K562 (cell line): ENCODE measurements at regions of chr1 and their contacts with region 1.

Region 1: DNA sequence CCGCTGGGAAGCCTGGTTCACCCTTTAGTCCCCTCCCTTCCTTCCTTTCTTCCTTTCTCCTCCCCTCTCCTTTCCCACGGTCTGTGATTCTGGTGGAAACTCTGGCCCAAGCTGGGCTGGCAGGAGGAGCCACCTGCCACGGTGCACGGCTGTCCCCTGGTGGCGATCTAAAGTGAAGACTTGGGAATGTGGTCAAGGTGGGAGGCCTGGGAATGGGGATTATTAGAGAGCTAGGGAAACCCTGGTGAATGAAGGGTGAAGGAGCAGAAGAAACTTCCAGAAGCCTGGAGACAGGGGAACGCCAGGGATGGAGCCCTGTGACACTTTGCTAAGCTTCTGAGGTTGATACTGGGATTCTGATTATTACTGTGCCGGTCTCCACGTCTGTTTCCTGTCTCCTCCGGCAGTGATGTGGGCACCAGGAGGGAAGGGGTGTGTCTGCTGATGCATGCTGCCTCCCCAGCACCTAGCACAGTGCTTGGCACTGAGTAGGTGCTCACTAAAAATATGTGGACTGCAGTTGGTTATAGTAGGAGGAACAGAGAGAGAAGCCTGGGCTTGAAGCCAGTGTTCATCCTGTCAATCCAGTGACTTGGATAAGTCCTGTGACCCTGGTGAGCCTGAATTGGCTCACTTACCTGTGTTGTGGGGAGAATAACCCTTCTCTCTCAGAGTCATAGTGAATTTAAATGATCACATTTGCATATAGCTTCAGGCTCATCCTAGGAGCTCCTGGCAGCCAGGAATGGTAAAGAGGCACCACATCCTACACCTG is 71.2 kb upstream of the NBPF3 start:
- DNase-seq: peak; percentile 72 to 86 (median 82)
- ATAC-seq: peak; percentile 91
- H3K4me3 ChIP-seq: no peak overlapping the region
- H3K27ac ChIP-seq: no peak overlapping the region
- H3K4me1 ChIP-seq: peaks cover 0 to 5% of the 10 kb centered on the region in 2 experiments; a peak in 1 of 5 replicates
- H3K27me3 ChIP-seq: peaks cover 5 to 6% of the 10 kb centered on the region in 2 experiments; a peak in 3 of 5 replicates
- CTCF ChIP-seq: peak; percentile 98 to 99 (median 99)
- EP300 ChIP-seq: peak; percentile 34
- POLR2A ChIP-seq: no peak
- RAD21 ChIP-seq: peak; percentile 100

Region 2: GRCh38 chr1:20493839-20494608 is 874.7 kb before region 1 on chr1:
- CTCF ChIA-PET with region 1: no interaction called
- POLR2A ChIA-PET with region 1: no interaction called
- in situ Hi-C with region 1: no loop called
- intact Hi-C with region 1: no loop called
- DNase-seq: peak; percentile 88 to 90 (median 90)
- ATAC-seq: peak; percentile 90
- H3K4me3 ChIP-seq: no peak overlapping the region
- H3K27ac ChIP-seq: no peak overlapping the region
- H3K4me1 ChIP-seq: peaks cover 0 to 3% of the 10 kb centered on the region in 2 experiments; a peak in 2 of 5 replicates
- H3K27me3 ChIP-seq: peaks cover 10 to 30% of the 10 kb centered on the region in 2 experiments; a peak in 4 of 5 replicates
- CTCF ChIP-seq: peak; percentile 96 to 99 (median 99)
- EP300 ChIP-seq: no peak
- POLR2A ChIP-seq: no peak
- RAD21 ChIP-seq: peak; percentile 99

Region 3: GRCh38 chr1:20702416-20702815 is 666.3 kb before region 1 on chr1:
- CTCF ChIA-PET with region 1: no interaction called
- POLR2A ChIA-PET with region 1: no interaction called
- in situ Hi-C with region 1: loop called (anchors 10 kb)
- intact Hi-C with region 1: no loop called
- DNase-seq: peak in 2 of 4 experiments; percentile 44 to 48
- ATAC-seq: peak; percentile 78
- H3K4me3 ChIP-seq: no peak overlapping the region
- H3K27ac ChIP-seq: no peak overlapping the region
- H3K4me1 ChIP-seq: peaks cover 0 to 17% of the 10 kb centered on the region in 2 experiments; a peak in 3 of 5 replicates
- H3K27me3 ChIP-seq: peaks cover 0 to 9% of the 10 kb centered on the region in 2 experiments; a peak in 1 of 5 replicates
- CTCF ChIP-seq: peak; percentile 57 to 64 (median 62)
- EP300 ChIP-seq: no peak
- POLR2A ChIP-seq: no peak
- RAD21 ChIP-seq: peak; percentile 29 to 71

Region 4: GRCh38 chr1:21255278-21255942 is 113.3 kb before region 1 on chr1:
- CTCF ChIA-PET with region 1: interaction called, 86 read pairs
- POLR2A ChIA-PET with region 1: interaction called, 8 read pairs
- in situ Hi-C with region 1: loop called (anchors 5 kb)
- intact Hi-C with region 1: loop called (anchors 1 kb)
- DNase-seq: peak; percentile 76 to 90 (median 80)
- ATAC-seq: peak; percentile 96
- H3K4me3 ChIP-seq: no peak overlapping the region
- H3K27ac ChIP-seq: no peak overlapping the region
- H3K4me1 ChIP-seq: peaks cover 0 to 6% of the 10 kb centered on the region in 2 experiments; a peak in 2 of 5 replicates
- H3K27me3 ChIP-seq: no peaks in the 10 kb centered on the region
- CTCF ChIP-seq: peak; percentile 92 to 98 (median 96)
- EP300 ChIP-seq: no peak
- POLR2A ChIP-seq: no peak
- RAD21 ChIP-seq: peak; percentile 98 to 99

Region 5: GRCh38 chr1:21478974-21479373 is 110.3 kb after region 1 on chr1:
- CTCF ChIA-PET with region 1: no interaction called
- POLR2A ChIA-PET with region 1: no interaction called
- in situ Hi-C with region 1: loop called (anchors 5 kb)
- intact Hi-C with region 1: no loop called
- DNase-seq: no peak
- ATAC-seq: no peak
- H3K4me3 ChIP-seq: no peak overlapping the region
- H3K27ac ChIP-seq: no peak overlapping the region
- H3K4me1 ChIP-seq: no peaks in the 10 kb centered on the region
- H3K27me3 ChIP-seq: peaks cover 0 to 6% of the 10 kb centered on the region in 2 experiments; a peak in 1 of 5 replicates
- CTCF ChIP-seq: no peak
- EP300 ChIP-seq: no peak
- POLR2A ChIP-seq: no peak
- RAD21 ChIP-seq: no peak

Region 6: DNA sequence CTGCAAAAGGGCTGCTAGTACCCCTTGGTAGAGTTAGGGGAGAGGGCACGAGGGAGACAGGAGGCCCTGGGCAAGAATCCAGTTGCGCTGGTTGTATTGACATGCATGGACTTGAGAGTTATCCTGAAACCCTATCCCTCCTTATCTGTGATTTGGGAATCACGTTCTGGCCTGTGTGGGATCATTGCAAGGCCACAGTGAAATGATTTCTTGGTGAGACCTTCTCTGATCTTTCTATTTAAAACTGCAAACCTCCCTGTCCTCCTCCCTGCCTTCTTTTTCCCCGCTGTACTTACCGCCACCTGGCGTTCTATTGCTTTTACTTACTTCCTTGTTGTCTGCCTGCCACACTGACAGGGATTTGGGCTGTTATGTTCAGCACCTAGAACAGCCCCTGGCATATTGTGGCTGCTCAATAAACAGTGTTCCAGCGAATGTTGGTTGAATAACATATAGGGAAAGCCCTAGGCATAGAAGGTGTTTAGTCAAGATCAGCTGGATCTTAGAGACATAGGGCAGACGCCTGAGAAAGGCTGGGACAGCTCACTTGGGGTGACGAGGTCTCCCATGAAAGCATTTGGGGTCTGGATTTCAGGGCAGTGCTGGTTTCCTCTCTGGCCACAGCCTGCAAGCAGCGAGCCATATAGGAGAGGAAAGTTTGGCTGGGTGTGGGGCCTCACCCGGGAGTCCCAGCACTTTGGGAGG is 166.1 kb after region 1 on chr1:
- CTCF ChIA-PET with region 1: interaction called, 28 read pairs
- POLR2A ChIA-PET with region 1: no interaction called
- in situ Hi-C with region 1: no loop called
- intact Hi-C with region 1: no loop called
- DNase-seq: peak; percentile 61 to 72 (median 65)
- ATAC-seq: peak; percentile 92
- H3K4me3 ChIP-seq: no peak overlapping the region
- H3K27ac ChIP-seq: no peak overlapping the region
- H3K4me1 ChIP-seq: peaks cover 0 to 12% of the 10 kb centered on the region in 2 experiments; a peak in 3 of 5 replicates
- H3K27me3 ChIP-seq: peaks cover 35 to 54% of the 10 kb centered on the region in 2 experiments; a peak in 4 of 5 replicates
- CTCF ChIP-seq: peak; percentile 76 to 90 (median 81)
- EP300 ChIP-seq: no peak
- POLR2A ChIP-seq: no peak
- RAD21 ChIP-seq: peak; percentile 52 to 78

Region 7: GRCh38 chr1:21659099-21659923 is 290.6 kb after region 1 on chr1:
- CTCF ChIA-PET with region 1: interaction called, 11 read pairs
- POLR2A ChIA-PET with region 1: no interaction called
- in situ Hi-C with region 1: loop called (anchors 5 kb)
- intact Hi-C with region 1: loop called (anchors 5 kb)
- DNase-seq: peak; percentile 90 to 100 (median 99)
- ATAC-seq: peak; percentile 96
- H3K4me3 ChIP-seq: peak overlapping the region; percentile 36
- H3K27ac ChIP-seq: no peak overlapping the region
- H3K4me1 ChIP-seq: peaks cover 13 to 31% of the 10 kb centered on the region in 2 experiments; a peak in 4 of 5 replicates
- H3K27me3 ChIP-seq: no peaks in the 10 kb centered on the region
- CTCF ChIP-seq: peak; percentile 89 to 97 (median 97)
- EP300 ChIP-seq: no peak; the same call in 1 of the 2 replicates
- POLR2A ChIP-seq: 0 out of 2 replicates have a peak, but pooled peaks have one; percentile 33
- RAD21 ChIP-seq: peak; percentile 97